Endothelial cell of umbilical vein (primary cell): ENCODE measurements at regions of chr10 and their contacts with region 1.

Region 1: GRCh38 chr10:51905032-51905431 is 205.6 kb upstream of the CSTF2T start:
- DNase-seq: no peak
- H3K4me3 ChIP-seq: no peak overlapping the region
- H3K27ac ChIP-seq: no peak overlapping the region
- H3K4me1 ChIP-seq: no peaks in the 10 kb centered on the region
- H3K27me3 ChIP-seq: no peaks in the 10 kb centered on the region
- CTCF ChIP-seq: no peak
- POLR2A ChIP-seq: no peak

Region 2: DNA sequence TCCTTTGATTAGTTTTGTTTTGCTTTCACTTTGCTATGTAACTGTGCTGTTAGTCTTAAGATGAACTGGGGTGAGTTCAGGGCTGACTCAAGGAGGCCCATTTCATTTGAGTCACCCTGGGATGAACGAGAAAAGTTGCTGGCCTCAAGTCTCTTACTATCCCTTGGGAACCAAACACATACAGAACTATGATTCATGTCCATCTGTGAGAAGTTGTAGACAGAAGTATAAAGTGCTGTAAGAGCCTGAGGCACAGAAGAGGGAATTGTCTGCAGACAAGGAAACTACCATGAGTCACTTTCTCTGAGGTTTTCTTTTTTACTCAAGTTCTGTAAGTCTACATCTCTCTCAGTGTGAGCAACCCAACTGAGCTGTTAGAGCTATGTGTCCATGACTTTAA is 25.8 kb before region 1 on chr10:
- CTCF ChIA-PET with region 1: no interaction called
- POLR2A ChIA-PET with region 1: no interaction called
- dilution Hi-C with region 1: no loop called
- intact Hi-C with region 1: loop called (anchors 2 kb)
- DNase-seq: peak; percentile 85
- H3K4me3 ChIP-seq: no peak overlapping the region
- H3K27ac ChIP-seq: peak overlapping the region; percentile 1
- H3K4me1 ChIP-seq: no peaks in the 10 kb centered on the region
- H3K27me3 ChIP-seq: no peaks in the 10 kb centered on the region
- CTCF ChIP-seq: no peak
- POLR2A ChIP-seq: no peak

Region 3: DNA sequence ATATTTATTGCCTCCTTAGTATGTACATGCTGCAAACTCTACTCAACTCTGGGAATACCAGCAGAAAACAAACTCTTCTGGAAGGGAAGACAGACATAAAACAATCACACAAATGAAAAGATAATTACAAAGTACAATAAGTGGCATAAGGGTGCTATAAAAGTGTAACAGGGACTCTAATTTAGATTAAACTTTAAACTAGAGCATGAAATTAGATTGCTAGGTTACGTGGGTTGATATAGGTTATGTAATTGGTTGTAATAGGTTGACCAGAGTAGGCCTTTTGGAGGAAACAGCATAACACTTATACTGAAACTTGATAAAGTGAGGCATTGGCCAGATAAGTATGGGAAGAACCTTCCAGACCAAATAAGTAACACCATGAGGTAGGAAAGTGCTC is 382.8 kb after region 1 on chr10:
- CTCF ChIA-PET with region 1: no interaction called
- POLR2A ChIA-PET with region 1: no interaction called
- dilution Hi-C with region 1: no loop called
- intact Hi-C with region 1: no loop called
- DNase-seq: no peak
- H3K4me3 ChIP-seq: no peak overlapping the region
- H3K27ac ChIP-seq: no peak overlapping the region
- H3K4me1 ChIP-seq: no peaks in the 10 kb centered on the region
- H3K27me3 ChIP-seq: no peaks in the 10 kb centered on the region
- CTCF ChIP-seq: no peak
- POLR2A ChIP-seq: no peak